Calu3 (cell line): ENCODE measurements at regions of chr14 and their contacts with region 1.

Region 1: DNA sequence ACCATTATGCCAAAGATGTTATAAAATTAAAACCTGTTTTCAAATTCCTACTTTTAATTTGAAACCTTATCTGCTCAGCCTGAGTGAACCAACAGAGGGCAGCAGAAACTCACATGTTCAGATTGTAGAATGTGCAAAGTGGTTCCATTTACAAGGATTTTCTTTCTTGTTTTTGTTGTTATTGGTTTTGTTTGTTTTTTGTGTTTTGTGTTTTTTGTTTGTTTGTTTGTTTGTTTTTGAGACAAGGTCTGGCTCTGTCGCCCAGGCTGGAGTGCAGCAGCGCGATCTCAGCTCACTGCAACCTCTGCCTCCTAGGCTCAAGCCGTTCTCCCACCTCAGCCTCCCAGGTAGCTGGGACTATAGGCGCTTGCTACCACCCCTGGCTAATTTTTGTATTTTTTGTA is 22.8 kb upstream of the GARIN2 start:
- DNase-seq: peak; percentile 51
- H3K4me3 Mint-ChIP-seq: no peak overlapping the region
- H3K27ac Mint-ChIP-seq: no peak overlapping the region
- H3K4me1 Mint-ChIP-seq: peaks cover 9% of the 10 kb centered on the region
- H3K27me3 Mint-ChIP-seq: no peaks in the 10 kb centered on the region
- CTCF ChIP-seq: peak; percentile 50

Region 2: GRCh38 chr14:67004521-67004920 is 161.9 kb before region 1 on chr14:
- CTCF ChIA-PET with region 1: no interaction called
- intact Hi-C with region 1: no loop called
- DNase-seq: no peak
- H3K4me3 Mint-ChIP-seq: no peak overlapping the region
- H3K27ac Mint-ChIP-seq: no peak overlapping the region
- H3K4me1 Mint-ChIP-seq: no peaks in the 10 kb centered on the region
- H3K27me3 Mint-ChIP-seq: no peaks in the 10 kb centered on the region
- CTCF ChIP-seq: no peak

Region 3: DNA sequence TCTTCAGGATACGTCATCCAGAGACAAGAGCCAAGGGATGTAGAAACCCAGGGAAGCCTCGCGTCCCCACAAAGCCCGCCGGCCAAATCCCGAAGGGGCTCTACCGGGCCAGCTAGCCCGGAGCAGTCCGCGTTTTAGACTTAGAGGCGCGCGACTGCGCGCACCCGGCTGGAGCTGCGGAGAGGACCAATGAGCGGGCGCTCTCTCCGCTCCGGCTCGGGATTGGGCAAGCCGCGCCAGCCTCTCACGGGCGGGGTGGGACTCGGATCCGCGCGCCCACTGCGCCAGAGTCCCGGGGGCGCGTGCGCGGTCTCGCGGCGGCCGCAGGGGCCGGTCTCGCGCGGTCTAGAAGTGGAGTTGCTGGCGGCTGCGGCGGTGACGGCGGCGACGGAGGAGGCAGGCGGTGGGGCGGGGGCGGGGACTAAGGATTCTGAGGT is 74.5 kb after region 1 on chr14:
- CTCF ChIA-PET with region 1: interaction called, 4 read pairs
- intact Hi-C with region 1: loop called (anchors 5 kb)
- DNase-seq: peak; percentile 96
- H3K4me3 Mint-ChIP-seq: peak overlapping the region; percentile 73
- H3K27ac Mint-ChIP-seq: peak overlapping the region; percentile 63
- H3K4me1 Mint-ChIP-seq: peaks cover 18% of the 10 kb centered on the region
- H3K27me3 Mint-ChIP-seq: no peaks in the 10 kb centered on the region
- CTCF ChIP-seq: no peak

Region 4: GRCh38 chr14:67285876-67286452 is 119.5 kb after region 1 on chr14:
- CTCF ChIA-PET with region 1: interaction called, 26 read pairs
- intact Hi-C with region 1: loop called (anchors 1 kb)
- DNase-seq: no peak
- H3K4me3 Mint-ChIP-seq: no peak overlapping the region
- H3K27ac Mint-ChIP-seq: no peak overlapping the region
- H3K4me1 Mint-ChIP-seq: no peaks in the 10 kb centered on the region
- H3K27me3 Mint-ChIP-seq: no peaks in the 10 kb centered on the region
- CTCF ChIP-seq: peak; percentile 47

Region 5: GRCh38 chr14:67335781-67336180 is 169.3 kb after region 1 on chr14:
- CTCF ChIA-PET with region 1: no interaction called
- intact Hi-C with region 1: loop called (anchors 2 kb)
- DNase-seq: peak; percentile 20
- H3K4me3 Mint-ChIP-seq: no peak overlapping the region
- H3K27ac Mint-ChIP-seq: no peak overlapping the region
- H3K4me1 Mint-ChIP-seq: peaks cover 8% of the 10 kb centered on the region
- H3K27me3 Mint-ChIP-seq: no peaks in the 10 kb centered on the region
- CTCF ChIP-seq: no peak

Region 6: GRCh38 chr14:67457782-67458181 is 291.3 kb after region 1 on chr14:
- CTCF ChIA-PET with region 1: no interaction called
- intact Hi-C with region 1: no loop called
- DNase-seq: no peak
- H3K4me3 Mint-ChIP-seq: no peak overlapping the region
- H3K27ac Mint-ChIP-seq: no peak overlapping the region
- H3K4me1 Mint-ChIP-seq: no peaks in the 10 kb centered on the region
- H3K27me3 Mint-ChIP-seq: peaks cover 46% of the 10 kb centered on the region
- CTCF ChIP-seq: no peak